CD8-positive, alpha-beta T cell (primary cell): ENCODE measurements at regions of chr16 and their contacts with region 1.

Region 1: DNA sequence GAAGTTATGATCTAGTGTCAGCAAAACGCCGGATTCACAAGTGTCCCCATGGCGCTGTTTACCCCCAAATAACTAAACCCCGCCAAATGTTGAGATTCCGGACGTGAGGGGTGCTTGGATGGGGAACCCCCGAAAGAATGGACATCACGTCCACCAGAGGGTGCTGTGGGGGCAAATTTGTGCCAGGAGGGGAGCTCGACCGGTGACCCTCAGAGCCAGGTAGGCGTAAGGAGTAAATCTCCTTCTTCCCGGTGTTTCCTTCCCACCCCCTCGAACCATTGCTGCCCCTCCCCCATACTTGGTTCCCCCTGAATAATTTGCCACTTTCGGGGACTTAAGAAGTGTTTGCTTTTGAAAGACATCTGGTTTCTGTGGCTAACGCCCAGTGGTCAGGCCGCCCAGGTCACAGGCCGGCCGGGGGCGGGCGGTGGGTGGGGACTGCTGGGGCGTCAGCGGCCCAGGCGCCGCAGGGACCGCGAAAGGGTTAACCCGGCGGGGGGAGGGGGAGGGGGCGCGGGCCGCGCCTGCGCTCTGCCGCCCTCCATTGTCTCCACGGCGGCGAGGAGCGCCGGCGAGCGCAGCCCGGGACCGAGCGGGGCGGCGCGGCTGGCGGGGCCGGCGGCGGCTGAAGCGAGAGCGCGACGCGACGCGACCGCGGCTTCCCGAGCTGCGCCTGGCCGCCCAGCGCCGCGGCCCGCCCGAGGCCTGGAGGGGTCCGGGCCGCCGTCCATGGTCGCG is at the start of gene ZNRF1:
- DNase-seq: peak; percentile 61 to 89 (median 79)
- ATAC-seq: peak; percentile 82
- H3K4me3 ChIP-seq: peak within 1 kb of the TSS; percentile 58 to 79
- H3K4me3 Mint-ChIP-seq: peak within 1 kb of the TSS; percentile 90
- H3K27ac ChIP-seq: peak within 1 kb of the TSS in 1 of 2 experiments; percentile 37
- H3K27ac Mint-ChIP-seq: peak within 1 kb of the TSS; percentile 85
- H3K4me1 ChIP-seq: peaks cover 20% of the 10 kb centered on the region
- H3K4me1 Mint-ChIP-seq: peaks cover 15% of the 10 kb centered on the region
- H3K27me3 ChIP-seq: peaks cover 0 to 7% of the 10 kb centered on the region in 2 experiments
- H3K27me3 Mint-ChIP-seq: no peaks in the 10 kb centered on the region
- CTCF ChIP-seq: peak; percentile 60
- total RNA-seq, gene ZNRF1: 1.7 to 2.0 TPM

Region 2: DNA sequence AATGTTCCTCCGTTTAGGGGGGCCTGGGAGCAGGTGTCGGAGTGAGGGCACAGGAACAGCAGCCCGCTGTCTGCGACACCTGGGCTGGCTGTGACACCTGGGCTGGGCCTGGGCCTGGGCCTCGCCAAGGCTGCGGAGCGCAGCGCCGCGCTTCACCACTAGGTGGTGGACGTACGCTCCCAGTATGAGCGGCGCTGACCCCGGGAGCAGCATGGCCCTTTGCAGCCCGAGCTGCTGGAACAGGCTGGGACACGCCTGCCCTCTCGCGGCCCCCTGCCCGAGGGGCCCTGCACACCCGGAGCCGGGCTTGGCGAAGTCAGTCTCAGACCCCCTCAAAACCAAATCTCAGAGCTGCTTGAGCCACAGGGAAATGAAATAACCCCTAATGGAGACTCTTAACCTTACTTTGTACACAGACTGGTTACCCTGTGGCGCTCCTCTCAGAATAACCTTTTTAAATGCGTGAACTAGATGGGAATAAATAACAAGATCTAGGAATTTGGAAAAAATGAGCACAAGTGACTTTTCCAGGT is 185.5 kb before region 1 on chr16:
- CTCF ChIA-PET with region 1: no interaction called
- POLR2A ChIA-PET with region 1: no interaction called
- intact Hi-C with region 1: loop called in 1 of 2 experiments (anchors 2 kb)
- DNase-seq: peak; percentile 44 to 80 (median 66)
- ATAC-seq: peak; percentile 99
- H3K4me3 ChIP-seq: no peak overlapping the region
- H3K4me3 Mint-ChIP-seq: no peak overlapping the region
- H3K27ac ChIP-seq: no peak overlapping the region
- H3K27ac Mint-ChIP-seq: no peak overlapping the region
- H3K4me1 ChIP-seq: peaks cover 3% of the 10 kb centered on the region
- H3K4me1 Mint-ChIP-seq: peaks cover 4% of the 10 kb centered on the region
- H3K27me3 ChIP-seq: no peaks in the 10 kb centered on the region
- H3K27me3 Mint-ChIP-seq: no peaks in the 10 kb centered on the region
- CTCF ChIP-seq: peak; percentile 85

Region 3: GRCh38 chr16:75064403-75065148 is 65.9 kb after region 1 on chr16:
- CTCF ChIA-PET with region 1: interaction called, 6 read pairs
- POLR2A ChIA-PET with region 1: no interaction called
- intact Hi-C with region 1: loop called in 1 of 2 experiments (anchors 2 kb)
- DNase-seq: peak in 5 of 9 experiments; percentile 15 to 56 (median 27)
- ATAC-seq: peak; percentile 32
- H3K4me3 ChIP-seq: peak overlapping the region; percentile 26 to 27
- H3K4me3 Mint-ChIP-seq: peak overlapping the region; percentile 76
- H3K27ac ChIP-seq: peak overlapping the region in 1 of 2 experiments; percentile 30
- H3K27ac Mint-ChIP-seq: peak overlapping the region; percentile 90
- H3K4me1 ChIP-seq: peaks cover 26% of the 10 kb centered on the region
- H3K4me1 Mint-ChIP-seq: peaks cover 42% of the 10 kb centered on the region
- H3K27me3 ChIP-seq: peaks cover 0 to 2% of the 10 kb centered on the region in 2 experiments
- H3K27me3 Mint-ChIP-seq: no peaks in the 10 kb centered on the region
- CTCF ChIP-seq: no peak

Region 4: DNA sequence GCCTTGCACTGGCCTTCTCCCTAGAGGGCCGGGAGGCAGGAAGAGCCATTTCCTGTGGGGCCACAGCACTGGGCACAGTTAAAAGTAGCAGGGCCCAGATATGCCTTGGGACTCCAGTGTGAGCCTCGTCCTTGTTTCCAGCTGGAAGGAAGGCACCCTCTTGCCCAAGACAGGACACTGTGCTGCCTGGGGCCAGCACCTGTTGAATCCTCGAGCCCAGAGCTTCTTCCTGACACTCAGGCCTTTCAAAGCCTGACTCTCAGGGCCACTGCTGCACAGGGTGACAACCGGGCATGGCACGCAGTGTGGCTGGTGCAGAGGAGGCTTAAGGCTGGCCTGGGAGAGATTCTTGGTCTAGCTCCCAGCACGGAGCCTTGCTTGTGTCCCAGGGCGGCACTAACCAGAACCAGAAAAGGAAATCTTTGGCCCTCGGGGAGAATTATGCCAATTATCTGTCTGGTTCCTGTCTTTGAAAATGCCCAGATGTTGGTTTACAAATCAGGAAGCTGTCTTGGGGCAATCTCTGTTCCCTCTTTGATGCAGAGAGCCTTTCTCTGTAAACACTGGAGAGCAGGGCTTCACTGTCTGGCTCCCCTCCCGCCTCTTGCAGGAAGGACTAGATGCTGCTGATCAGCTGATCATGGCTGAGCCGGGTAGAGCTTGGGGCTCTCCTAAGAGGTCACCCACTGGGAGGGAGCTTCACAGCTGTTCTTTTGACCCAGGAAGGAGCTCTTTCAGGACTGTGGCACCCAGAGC is 106.8 kb after region 1 on chr16:
- CTCF ChIA-PET with region 1: interaction called, 161 read pairs
- POLR2A ChIA-PET with region 1: no interaction called
- intact Hi-C with region 1: no loop called
- DNase-seq: no peak
- ATAC-seq: no peak
- H3K4me3 ChIP-seq: no peak overlapping the region
- H3K4me3 Mint-ChIP-seq: no peak overlapping the region
- H3K27ac ChIP-seq: no peak overlapping the region
- H3K27ac Mint-ChIP-seq: no peak overlapping the region
- H3K4me1 ChIP-seq: peaks cover 20% of the 10 kb centered on the region
- H3K4me1 Mint-ChIP-seq: peaks cover 37% of the 10 kb centered on the region
- H3K27me3 ChIP-seq: no peaks in the 10 kb centered on the region
- H3K27me3 Mint-ChIP-seq: no peaks in the 10 kb centered on the region
- CTCF ChIP-seq: no peak

Region 5: DNA sequence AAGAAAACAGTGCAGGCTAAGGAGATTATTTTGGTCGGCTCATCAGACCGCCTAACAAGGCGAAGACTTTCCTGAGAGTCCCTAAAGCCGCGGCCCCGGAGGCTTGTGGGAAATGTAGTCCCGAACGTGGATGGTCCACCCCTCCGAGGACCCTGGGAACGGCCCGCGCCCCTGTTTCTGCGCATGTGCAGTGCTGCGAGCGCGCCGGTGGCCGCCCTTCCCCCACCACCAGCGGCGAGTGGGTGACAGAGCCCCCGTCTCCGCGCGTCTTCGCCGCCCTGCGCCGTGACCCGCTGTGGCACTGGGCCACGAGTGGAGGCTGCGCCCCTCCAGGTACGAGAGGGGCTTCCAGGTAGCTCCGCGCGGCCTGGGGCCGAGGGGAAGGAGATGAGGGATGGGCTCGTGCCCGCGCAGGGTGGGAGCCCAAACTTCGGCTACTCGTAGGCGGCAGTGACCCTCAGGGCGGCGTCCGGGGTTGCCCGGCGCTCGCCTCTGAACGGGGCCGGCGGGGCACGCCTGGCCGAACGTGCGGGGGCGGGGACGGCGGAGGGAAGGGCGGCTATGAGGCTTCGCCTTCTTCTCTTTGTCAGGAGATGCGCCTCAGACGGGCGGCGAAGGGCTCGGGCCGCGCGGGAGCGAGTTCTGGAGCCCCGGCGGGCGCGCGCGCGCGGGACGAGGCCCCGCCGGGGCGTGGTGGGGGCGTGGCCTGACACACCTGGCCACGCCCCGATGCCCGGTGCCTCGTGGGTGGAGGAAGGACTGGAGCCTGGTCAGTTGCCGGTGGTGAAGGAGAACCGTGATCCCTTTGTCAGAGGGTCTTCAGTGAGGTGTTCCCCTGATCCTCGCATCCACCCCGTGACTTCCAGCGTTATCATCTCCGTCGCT is 149.9 kb after region 1 on chr16 and contains the start of gene ZFP1:
- CTCF ChIA-PET with region 1: no interaction called
- POLR2A ChIA-PET with region 1: no interaction called
- intact Hi-C with region 1: loop called (anchors 1 kb)
- DNase-seq: peak; percentile 86 to 98 (median 95)
- ATAC-seq: peak; percentile 89
- H3K4me3 ChIP-seq: peak within 1 kb of the TSS; percentile 85 to 100
- H3K4me3 Mint-ChIP-seq: peak within 1 kb of the TSS; percentile 87
- H3K27ac ChIP-seq: peak within 1 kb of the TSS; percentile 84
- H3K27ac Mint-ChIP-seq: peak within 1 kb of the TSS; percentile 88
- H3K4me1 ChIP-seq: peaks cover 12% of the 10 kb centered on the region
- H3K4me1 Mint-ChIP-seq: peaks cover 16% of the 10 kb centered on the region
- H3K27me3 ChIP-seq: no peaks in the 10 kb centered on the region
- H3K27me3 Mint-ChIP-seq: no peaks in the 10 kb centered on the region
- CTCF ChIP-seq: no peak
- total RNA-seq, gene ZFP1: 11.9 to 12.9 TPM